ENCODE measurements at regions of chr18 and their contacts with region 1.

Region 1: GRCh38 chr18:8704361-8705279 is 736 bp upstream of the MTCL1 start:
- DNase-seq: peak; percentile 39 to 92
- H3K4me3 ChIP-seq: peak overlapping the region; percentile 79 to 97
- H3K27ac ChIP-seq: peak overlapping the region; percentile 89 to 96
- H3K4me1 ChIP-seq: peaks cover 4 to 11% of the 10 kb centered on the region in 2 donors
- H3K27me3 ChIP-seq: no peaks in the 10 kb centered on the region
- CTCF ChIP-seq: peak in 1 of 3 experiments; percentile 4

Region 2: GRCh38 chr18:8608795-8609658 is 95.6 kb before region 1 on chr18 and contains the start of gene RAB12:
- intact Hi-C with region 1: loop called (anchors 2 kb)
- DNase-seq: peak; percentile 22 to 93
- H3K4me3 ChIP-seq: peak within 1 kb of the TSS; percentile 84 to 100
- H3K27ac ChIP-seq: peak within 1 kb of the TSS; percentile 76 to 88
- H3K4me1 ChIP-seq: peaks cover 14 to 31% of the 10 kb centered on the region in 2 donors
- H3K27me3 ChIP-seq: no peaks in the 10 kb centered on the region
- CTCF ChIP-seq: peak; percentile 30 to 92 (median 48)
- total RNA-seq, gene RAB12: 35.5 TPM

Region 3: DNA sequence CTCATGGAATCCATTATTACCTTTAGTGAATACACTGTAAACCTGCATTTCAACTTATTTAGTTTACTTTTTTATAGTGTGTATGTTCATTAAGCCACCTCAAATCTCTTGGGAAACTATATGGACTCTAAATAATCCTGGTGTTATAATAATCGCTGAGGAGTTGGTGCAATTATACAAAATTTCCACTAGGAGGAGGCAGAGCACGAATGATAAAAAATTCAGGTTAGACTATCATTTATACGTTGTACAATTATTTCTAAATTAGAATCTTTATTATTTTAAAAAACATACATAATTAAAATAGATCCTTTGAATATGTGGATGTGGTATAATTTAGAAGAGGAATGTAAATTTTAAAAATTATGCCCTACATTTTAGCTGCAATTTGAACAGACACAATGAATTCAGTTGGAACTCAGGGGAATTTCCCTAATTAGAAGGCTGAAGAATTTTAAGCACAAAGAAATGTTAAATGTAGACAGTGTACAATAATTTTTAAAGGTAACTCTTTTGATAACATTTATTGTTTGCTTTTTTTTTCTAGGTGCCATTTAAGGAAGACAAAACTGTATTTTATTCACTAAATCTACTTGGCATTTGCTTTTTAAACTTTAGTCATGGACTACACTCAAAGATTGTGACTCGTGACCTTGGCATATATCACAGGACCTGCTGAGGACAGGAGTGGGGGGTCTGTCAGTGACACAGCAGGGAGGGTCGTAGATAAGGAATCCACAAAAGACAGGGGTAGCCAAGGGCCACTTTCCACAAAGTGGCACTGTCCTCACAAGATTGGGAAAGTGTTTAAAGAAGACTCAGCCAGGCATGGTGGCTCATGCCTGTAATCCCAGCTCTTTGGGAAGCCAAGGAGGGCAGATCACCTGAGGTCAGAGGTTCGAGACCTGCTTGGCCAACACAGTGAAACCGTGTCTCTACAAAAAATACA is 49.8 kb before region 1 on chr18:
- intact Hi-C with region 1: no loop called
- DNase-seq: no peak
- H3K4me3 ChIP-seq: no peak overlapping the region
- H3K27ac ChIP-seq: no peak overlapping the region
- H3K4me1 ChIP-seq: no peaks in the 10 kb centered on the region
- H3K27me3 ChIP-seq: no peaks in the 10 kb centered on the region
- CTCF ChIP-seq: peak; percentile 32 to 79 (median 78)

Region 4: DNA sequence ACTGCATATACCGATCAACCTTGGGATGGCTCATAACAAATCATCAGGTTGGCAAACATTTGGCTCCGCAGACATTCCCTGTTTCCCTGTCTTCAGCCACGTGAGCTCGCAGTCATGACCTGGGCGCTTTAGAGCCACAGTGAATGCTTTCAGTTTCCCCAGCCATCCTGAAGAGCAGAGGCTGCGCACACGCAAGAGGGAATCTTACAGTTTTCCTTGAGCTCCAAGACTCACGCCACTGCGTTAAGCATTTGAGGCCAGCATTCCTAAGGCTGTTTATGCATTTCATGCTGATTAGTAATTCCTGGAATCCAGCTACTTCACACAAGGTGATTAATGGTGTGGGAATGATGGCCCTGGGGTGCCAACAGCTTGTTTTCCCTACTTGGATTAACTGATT is 95.8 kb after region 1 on chr18:
- intact Hi-C with region 1: loop called (anchors 2 kb)
- DNase-seq: no peak
- H3K4me3 ChIP-seq: peak overlapping the region in 1 of 2 donors; percentile 55
- H3K27ac ChIP-seq: peak overlapping the region; percentile 7 to 70
- H3K4me1 ChIP-seq: peaks cover 0 to 9% of the 10 kb centered on the region in 2 donors
- H3K27me3 ChIP-seq: no peaks in the 10 kb centered on the region
- CTCF ChIP-seq: no peak

Region 5: GRCh38 chr18:8988261-8988871 is 283.7 kb after region 1 on chr18:
- intact Hi-C with region 1: loop called (anchors 2 kb)
- DNase-seq: peak in 1 of 2 donors; percentile 66
- H3K4me3 ChIP-seq: no peak overlapping the region
- H3K27ac ChIP-seq: no peak overlapping the region
- H3K4me1 ChIP-seq: peaks cover 0 to 3% of the 10 kb centered on the region in 2 donors
- H3K27me3 ChIP-seq: no peaks in the 10 kb centered on the region
- CTCF ChIP-seq: peak; percentile 27 to 77 (median 70)

Region 6: DNA sequence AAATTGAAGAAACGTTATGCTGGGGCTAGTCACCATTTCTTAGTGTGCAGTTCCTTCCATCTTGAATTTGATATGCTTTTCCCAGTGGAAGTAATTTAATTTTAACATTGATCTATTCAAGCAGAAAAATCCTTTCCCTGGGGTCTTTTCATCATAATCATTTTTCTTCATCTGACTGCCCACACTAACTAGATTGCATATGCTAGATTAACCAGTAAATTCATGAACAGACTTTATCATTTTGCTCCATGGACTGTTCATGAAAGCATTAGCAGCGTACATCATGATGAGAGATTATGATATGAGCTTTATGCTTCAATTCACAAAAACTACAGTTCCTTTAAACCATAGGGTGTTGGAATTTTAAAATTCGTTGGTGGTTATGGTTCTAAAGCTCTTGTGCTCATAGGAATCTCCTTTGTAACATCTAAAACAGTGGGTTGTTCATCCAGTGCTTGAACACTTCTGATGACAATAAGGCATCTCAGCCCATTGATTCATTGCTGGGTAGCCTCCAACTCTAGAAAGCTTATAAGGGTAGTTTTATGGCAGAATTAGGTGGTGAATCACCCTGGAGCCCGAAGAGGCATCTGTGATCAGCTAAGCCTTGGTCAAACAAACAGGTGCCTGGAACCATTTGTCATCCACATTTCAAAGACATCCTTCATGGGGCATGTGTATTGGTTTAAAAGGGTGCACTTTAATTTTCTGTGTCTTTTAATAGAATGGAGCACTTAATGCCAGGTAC is 320.6 kb after region 1 on chr18:
- intact Hi-C with region 1: no loop called
- DNase-seq: no peak
- H3K4me3 ChIP-seq: no peak overlapping the region
- H3K27ac ChIP-seq: no peak overlapping the region
- H3K4me1 ChIP-seq: no peaks in the 10 kb centered on the region
- H3K27me3 ChIP-seq: no peaks in the 10 kb centered on the region
- CTCF ChIP-seq: no peak

Measured in ascending aorta (tissue), 2 donors.